ENCODE measurements at regions of chr7 and their contacts with region 1.

Region 1: GRCh38 chr7:100407285-100408180 is 21.0 kb downstream of the ZCWPW1 start:
- DNase-seq: peak; percentile 41 to 71
- H3K4me3 ChIP-seq: no peak overlapping the region
- H3K4me3 Mint-ChIP-seq: no peak overlapping the region
- H3K27ac Mint-ChIP-seq: no peak overlapping the region
- H3K4me1 ChIP-seq: no peaks in the 10 kb centered on the region
- H3K4me1 Mint-ChIP-seq: no peaks in the 10 kb centered on the region
- H3K27me3 ChIP-seq: 0 out of 2 replicates have a peak, but pooled peaks cover 1% of the 10 kb centered on the region
- H3K27me3 Mint-ChIP-seq: peaks cover 3% of the 10 kb centered on the region
- CTCF ChIP-seq: peak; percentile 56 to 74

Region 2: DNA sequence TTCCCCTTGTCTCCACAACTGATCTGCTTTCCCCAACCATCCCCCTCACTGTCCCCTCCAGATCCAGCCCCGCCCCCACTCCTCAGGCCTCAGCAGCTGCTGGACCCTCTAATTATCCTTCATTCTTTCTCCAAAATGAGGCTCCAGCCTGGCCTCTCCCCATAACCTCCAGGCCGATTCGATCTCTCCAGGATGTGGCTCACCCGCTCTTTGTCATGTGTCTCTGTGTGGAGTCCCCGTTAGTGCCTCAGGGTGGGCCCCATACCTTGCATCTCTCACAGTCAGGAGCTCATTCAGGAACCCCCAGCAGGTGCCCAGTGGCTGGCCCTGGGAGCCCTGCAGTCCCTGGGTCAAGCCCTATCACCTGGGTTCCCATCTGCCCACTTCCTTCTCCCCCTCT is 32.9 kb before region 1 on chr7:
- CTCF ChIA-PET with region 1: interaction called, 7 read pairs
- POLR2A ChIA-PET with region 1: no interaction called
- intact Hi-C with region 1: loop called (anchors 1 kb)
- DNase-seq: no peak
- H3K4me3 ChIP-seq: no peak overlapping the region
- H3K4me3 Mint-ChIP-seq: no peak overlapping the region
- H3K27ac Mint-ChIP-seq: no peak overlapping the region
- H3K4me1 ChIP-seq: no peaks in the 10 kb centered on the region
- H3K4me1 Mint-ChIP-seq: no peaks in the 10 kb centered on the region
- H3K27me3 ChIP-seq: no peaks in the 10 kb centered on the region
- H3K27me3 Mint-ChIP-seq: no peaks in the 10 kb centered on the region
- CTCF ChIP-seq: no peak

Region 3: DNA sequence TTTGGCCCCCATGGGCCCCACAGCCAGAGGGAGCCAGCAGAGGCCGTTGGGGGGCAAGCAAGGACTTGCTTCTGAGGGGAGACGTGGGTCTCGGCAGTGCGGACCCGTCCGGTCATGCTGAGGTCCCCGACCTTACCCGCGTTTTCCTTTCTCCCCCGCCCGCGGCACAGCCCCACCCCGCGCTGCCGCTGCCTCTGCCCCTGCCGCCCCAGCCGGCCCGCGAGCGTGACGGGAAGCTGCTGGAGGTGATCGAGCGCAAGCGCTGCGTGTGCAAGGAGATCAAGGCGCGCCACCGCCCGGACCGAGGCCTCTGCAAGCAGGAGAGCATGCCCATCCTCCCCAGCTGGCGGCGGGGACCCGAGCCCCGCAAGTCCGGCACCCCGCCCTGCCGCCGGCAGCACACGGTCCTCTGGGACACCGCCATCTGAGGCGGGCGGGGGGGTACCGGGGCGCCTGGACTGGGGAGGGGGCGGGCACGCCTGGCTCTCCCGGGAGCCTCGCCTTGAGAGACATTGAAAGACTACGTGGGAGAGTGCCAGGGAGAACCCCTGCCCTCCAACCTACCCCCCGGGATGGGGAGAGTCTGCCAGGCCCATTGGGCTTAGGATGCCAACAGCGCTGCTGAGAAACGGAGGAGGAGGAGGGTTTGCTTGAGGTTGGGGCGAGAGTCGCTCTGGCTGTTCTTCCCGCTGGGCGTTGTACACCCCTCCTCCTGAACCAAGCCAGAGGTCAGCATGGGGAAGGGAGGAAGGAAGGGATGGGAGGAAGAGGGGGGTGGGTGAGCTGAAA is 86.1 kb after region 1 on chr7:
- CTCF ChIA-PET with region 1: no interaction called
- POLR2A ChIA-PET with region 1: no interaction called
- intact Hi-C with region 1: no loop called
- DNase-seq: peak in 1 of 2 experiments; percentile 41
- H3K4me3 ChIP-seq: peak overlapping the region; percentile 41
- H3K4me3 Mint-ChIP-seq: peak overlapping the region; percentile 24
- H3K27ac Mint-ChIP-seq: peak overlapping the region; percentile 31
- H3K4me1 ChIP-seq: no peaks in the 10 kb centered on the region
- H3K4me1 Mint-ChIP-seq: no peaks in the 10 kb centered on the region
- H3K27me3 ChIP-seq: no peaks in the 10 kb centered on the region
- H3K27me3 Mint-ChIP-seq: no peaks in the 10 kb centered on the region
- CTCF ChIP-seq: no peak

Region 4: GRCh38 chr7:100889761-100890634 is 482.5 kb after region 1 on chr7:
- CTCF ChIA-PET with region 1: no interaction called
- POLR2A ChIA-PET with region 1: no interaction called
- intact Hi-C with region 1: no loop called
- DNase-seq: peak; percentile 94 to 96
- H3K4me3 ChIP-seq: peak overlapping the region; percentile 67
- H3K4me3 Mint-ChIP-seq: peak overlapping the region; percentile 88
- H3K27ac Mint-ChIP-seq: peak overlapping the region; percentile 87
- H3K4me1 ChIP-seq: peaks cover 29% of the 10 kb centered on the region
- H3K4me1 Mint-ChIP-seq: peaks cover 50% of the 10 kb centered on the region
- H3K27me3 ChIP-seq: no peaks in the 10 kb centered on the region
- H3K27me3 Mint-ChIP-seq: no peaks in the 10 kb centered on the region
- CTCF ChIP-seq: no peak